ENCODE measurements at regions of chr9 and their contacts with region 1.

Region 1: DNA sequence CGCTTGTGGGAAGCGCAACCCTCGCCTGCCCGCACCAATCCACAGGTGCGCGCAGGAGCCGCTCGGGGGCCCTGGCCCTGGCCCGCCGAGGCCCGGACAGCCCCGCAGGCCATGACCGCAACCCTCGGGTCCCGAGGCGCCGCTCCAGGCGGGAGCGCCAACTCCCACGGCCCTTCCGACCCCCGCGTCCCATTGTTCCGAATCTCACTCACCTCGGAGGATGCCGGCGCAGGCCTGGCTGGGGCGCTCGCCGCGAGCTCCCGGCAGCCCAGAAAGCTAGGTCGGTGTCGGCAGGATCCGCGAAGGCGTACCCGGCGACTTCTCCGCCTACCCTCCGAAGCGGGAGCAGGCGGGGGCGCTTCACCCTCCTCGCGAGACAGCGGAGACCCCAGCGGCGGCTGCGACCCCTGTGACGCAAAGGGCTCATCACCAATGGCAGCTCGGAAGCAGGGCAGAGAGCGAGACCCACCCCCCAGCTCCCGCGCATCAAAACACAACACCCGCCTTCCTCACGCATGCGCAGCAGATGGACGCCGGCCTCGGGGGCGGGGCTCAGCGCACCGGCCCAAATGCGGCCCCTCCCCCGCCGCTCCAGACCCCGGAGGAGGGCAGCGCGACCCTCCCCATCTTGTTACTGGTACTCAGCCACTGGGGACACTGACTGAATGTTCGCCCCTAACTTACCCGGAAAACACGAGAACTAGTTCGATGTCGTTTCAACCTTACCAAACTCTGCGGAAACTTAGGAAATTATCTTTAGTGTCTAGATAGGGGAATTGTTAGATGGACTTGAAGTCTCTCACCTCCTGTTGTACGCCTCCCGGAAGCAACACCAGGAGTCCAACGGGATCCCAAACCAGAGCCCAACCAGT is 1.3 kb upstream of the SMIM27 start:
- DNase-seq: peak; percentile 89 to 99 (median 96)
- ATAC-seq: peak; percentile 90
- H3K4me3 ChIP-seq: peak overlapping the region; percentile 93
- H3K4me3 Mint-ChIP-seq: peak overlapping the region; percentile 92 to 100 (median 99)
- H3K27ac ChIP-seq: peak overlapping the region; percentile 97
- H3K27ac Mint-ChIP-seq: peak overlapping the region; percentile 96 to 100 (median 98)
- H3K4me1 ChIP-seq: peaks cover 13 to 20% of the 10 kb centered on the region in 2 donors
- H3K4me1 Mint-ChIP-seq: peaks cover 31 to 70% (median 56%) of the 10 kb centered on the region in 7 donors
- H3K27me3 ChIP-seq: no peaks in the 10 kb centered on the region
- H3K27me3 Mint-ChIP-seq: no peaks in the 10 kb centered on the region

Region 2: GRCh38 chr9:32378993-32379729 is 171.6 kb before region 1 on chr9:
- CTCF ChIA-PET with region 1: interaction called, 10 read pairs
- POLR2A ChIA-PET with region 1: interaction called, 16 read pairs
- intact Hi-C with region 1: loop called (anchors 1 kb)
- DNase-seq: peak in 7 of 9 donors; percentile 49 to 78 (median 68)
- ATAC-seq: peak; percentile 90
- H3K4me3 ChIP-seq: no peak overlapping the region
- H3K4me3 Mint-ChIP-seq: peak overlapping the region in 4 of 10 donors; percentile 15 to 49 (median 36)
- H3K27ac ChIP-seq: no peak overlapping the region
- H3K27ac Mint-ChIP-seq: peak overlapping the region in 8 of 9 donors; percentile 1 to 83 (median 32)
- H3K4me1 ChIP-seq: peaks cover 5 to 13% of the 10 kb centered on the region in 2 donors
- H3K4me1 Mint-ChIP-seq: peaks cover 11 to 19% (median 16%) of the 10 kb centered on the region in 7 donors
- H3K27me3 ChIP-seq: no peaks in the 10 kb centered on the region
- H3K27me3 Mint-ChIP-seq: peaks cover 0 to 37% (median 9%) of the 10 kb centered on the region in 5 donors

Region 3: GRCh38 chr9:32533336-32533735 is 17.5 kb before region 1 on chr9:
- CTCF ChIA-PET with region 1: interaction called, 4 read pairs
- POLR2A ChIA-PET with region 1: interaction called, 21 read pairs
- intact Hi-C with region 1: loop called in 1 of 2 experiments (anchors 1 kb)
- DNase-seq: no peak
- ATAC-seq: no peak
- H3K4me3 ChIP-seq: no peak overlapping the region
- H3K4me3 Mint-ChIP-seq: no peak overlapping the region
- H3K27ac ChIP-seq: no peak overlapping the region
- H3K27ac Mint-ChIP-seq: peak overlapping the region in 1 of 9 donors; percentile 49
- H3K4me1 ChIP-seq: no peaks in the 10 kb centered on the region
- H3K4me1 Mint-ChIP-seq: peaks cover 0 to 6% (median 4%) of the 10 kb centered on the region in 7 donors
- H3K27me3 ChIP-seq: no peaks in the 10 kb centered on the region
- H3K27me3 Mint-ChIP-seq: no peaks in the 10 kb centered on the region

Region 4: GRCh38 chr9:32627394-32627944 is 76.7 kb after region 1 on chr9:
- CTCF ChIA-PET with region 1: no interaction called
- POLR2A ChIA-PET with region 1: no interaction called
- intact Hi-C with region 1: no loop called
- DNase-seq: no peak
- ATAC-seq: no peak
- H3K4me3 ChIP-seq: no peak overlapping the region
- H3K4me3 Mint-ChIP-seq: no peak overlapping the region
- H3K27ac ChIP-seq: no peak overlapping the region
- H3K27ac Mint-ChIP-seq: no peak overlapping the region
- H3K4me1 ChIP-seq: no peaks in the 10 kb centered on the region
- H3K4me1 Mint-ChIP-seq: no peaks in the 10 kb centered on the region
- H3K27me3 ChIP-seq: no peaks in the 10 kb centered on the region
- H3K27me3 Mint-ChIP-seq: peaks cover 0 to 9% (median 7%) of the 10 kb centered on the region in 5 donors

Region 5: GRCh38 chr9:33024966-33025571 is 474.3 kb after region 1 on chr9 and contains the start of gene DNAJA1:
- CTCF ChIA-PET with region 1: no interaction called
- POLR2A ChIA-PET with region 1: no interaction called
- intact Hi-C with region 1: loop called (anchors 1 kb)
- DNase-seq: peak; percentile 92 to 99 (median 97)
- ATAC-seq: peak; percentile 91
- H3K4me3 ChIP-seq: peak within 1 kb of the TSS; percentile 98
- H3K4me3 Mint-ChIP-seq: peak within 1 kb of the TSS; percentile 91 to 99 (median 96)
- H3K27ac ChIP-seq: peak within 1 kb of the TSS; percentile 100
- H3K27ac Mint-ChIP-seq: peak within 1 kb of the TSS; percentile 82 to 98 (median 95)
- H3K4me1 ChIP-seq: peaks cover 37 to 49% of the 10 kb centered on the region in 2 donors
- H3K4me1 Mint-ChIP-seq: peaks cover 51 to 83% (median 78%) of the 10 kb centered on the region in 7 donors
- H3K27me3 ChIP-seq: no peaks in the 10 kb centered on the region
- H3K27me3 Mint-ChIP-seq: no peaks in the 10 kb centered on the region
- total RNA-seq, gene DNAJA1: 66.8 to 204 (median 119) TPM

Region 6: GRCh38 chr9:33473643-33474352 is 923.0 kb after region 1 on chr9 and contains the start of gene NOL6:
- CTCF ChIA-PET with region 1: no interaction called
- POLR2A ChIA-PET with region 1: no interaction called
- intact Hi-C with region 1: loop called in 1 of 2 experiments (anchors 2 kb)
- DNase-seq: peak; percentile 91 to 99 (median 98)
- ATAC-seq: peak; percentile 100
- H3K4me3 ChIP-seq: peak within 1 kb of the TSS; percentile 88
- H3K4me3 Mint-ChIP-seq: peak within 1 kb of the TSS; percentile 88 to 100 (median 97)
- H3K27ac ChIP-seq: peak within 1 kb of the TSS; percentile 78
- H3K27ac Mint-ChIP-seq: peak within 1 kb of the TSS; percentile 88 to 99 (median 96)
- H3K4me1 ChIP-seq: peaks cover 13 to 19% of the 10 kb centered on the region in 2 donors
- H3K4me1 Mint-ChIP-seq: peaks cover 9 to 38% (median 31%) of the 10 kb centered on the region in 7 donors
- H3K27me3 ChIP-seq: no peaks in the 10 kb centered on the region
- H3K27me3 Mint-ChIP-seq: no peaks in the 10 kb centered on the region
- total RNA-seq, gene NOL6: 34.0 to 48.0 (median 44.0) TPM

Measured in naive thymus-derived CD4-positive, alpha-beta T cell (primary cell).